Psoas muscle (tissue), 8 donors: ENCODE measurements at regions of chr2 and their contacts with region 1.

Region 1: GRCh38 chr2:36450466-36451196 is 95.1 kb downstream of the CRIM1 start:
- DNase-seq: no peak
- ATAC-seq: peak in 3 of 4 donors; percentile 67 to 75 (median 69)
- H3K4me3 ChIP-seq: no peak overlapping the region
- H3K27ac ChIP-seq: peak overlapping the region; percentile 75
- H3K4me1 ChIP-seq: peaks cover 94% of the 10 kb centered on the region
- H3K27me3 ChIP-seq: no peaks in the 10 kb centered on the region
- CTCF ChIP-seq: no peak

Region 2: DNA sequence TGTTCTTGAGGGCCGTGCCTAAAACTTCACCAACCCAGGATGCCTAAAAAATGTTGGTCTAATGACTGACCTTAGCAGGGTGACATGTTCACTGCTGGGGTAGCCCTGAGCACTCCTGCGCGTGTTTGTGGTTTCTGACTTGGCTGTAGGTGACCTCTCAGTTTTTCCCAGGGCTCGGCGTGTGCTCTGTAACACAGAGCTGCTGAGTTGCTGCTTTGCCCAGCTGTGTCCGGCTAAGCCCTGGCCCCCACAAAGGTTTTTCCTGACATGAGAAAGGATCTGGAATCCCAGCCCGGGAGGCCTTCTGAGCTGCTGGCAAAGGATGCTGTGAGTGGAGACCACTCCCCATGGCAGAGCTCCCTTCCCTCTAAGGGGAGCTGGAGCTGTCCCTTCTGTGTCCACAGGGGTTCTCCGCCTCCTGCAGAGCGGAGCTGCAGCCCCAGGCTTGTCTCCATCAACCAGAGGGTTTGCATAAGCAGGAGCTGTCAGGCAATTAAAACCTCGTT is 42.4 kb before region 1 on chr2:
- intact Hi-C with region 1: loop called in 1 of 2 experiments (anchors 5 kb)
- DNase-seq: peak; percentile 14 to 42
- ATAC-seq: peak; percentile 62 to 79 (median 76)
- H3K4me3 ChIP-seq: peak overlapping the region; percentile 17
- H3K27ac ChIP-seq: peak overlapping the region; percentile 60
- H3K4me1 ChIP-seq: peaks cover 92% of the 10 kb centered on the region
- H3K27me3 ChIP-seq: no peaks in the 10 kb centered on the region
- CTCF ChIP-seq: no peak